OCI-LY7 (cell line): ENCODE measurements at regions of chr3 and their contacts with region 1.

Region 1: GRCh38 chr3:5136211-5136918 is 14.3 kb downstream of the ARL8B start:
- DNase-seq: peak; percentile 83
- H3K4me3 ChIP-seq: no peak overlapping the region
- H3K27ac ChIP-seq: peak overlapping the region; percentile 53
- H3K4me1 ChIP-seq: peaks cover 47% of the 10 kb centered on the region
- CTCF ChIP-seq: peak; percentile 92

Region 2: GRCh38 chr3:4162096-4162495 is 974.3 kb before region 1 on chr3:
- CTCF ChIA-PET with region 1: no interaction called
- POLR2A ChIA-PET with region 1: no interaction called
- intact Hi-C with region 1: no loop called
- DNase-seq: no peak
- H3K4me3 ChIP-seq: no peak overlapping the region
- H3K27ac ChIP-seq: no peak overlapping the region
- H3K4me1 ChIP-seq: no peaks in the 10 kb centered on the region
- CTCF ChIP-seq: no peak

Region 3: GRCh38 chr3:4615750-4616149 is 520.6 kb before region 1 on chr3:
- CTCF ChIA-PET with region 1: no interaction called
- POLR2A ChIA-PET with region 1: no interaction called
- intact Hi-C with region 1: no loop called
- DNase-seq: no peak
- H3K4me3 ChIP-seq: no peak overlapping the region
- H3K27ac ChIP-seq: no peak overlapping the region
- H3K4me1 ChIP-seq: no peaks in the 10 kb centered on the region
- CTCF ChIP-seq: no peak

Region 4: GRCh38 chr3:5122030-5122740 is 14.2 kb before region 1 on chr3 and contains the start of gene ARL8B:
- CTCF ChIA-PET with region 1: no interaction called
- POLR2A ChIA-PET with region 1: interaction called, 52 read pairs
- intact Hi-C with region 1: no loop called
- DNase-seq: peak; percentile 92
- H3K4me3 ChIP-seq: peak within 1 kb of the TSS; percentile 99
- H3K27ac ChIP-seq: peak within 1 kb of the TSS; percentile 31
- H3K4me1 ChIP-seq: peaks cover 27% of the 10 kb centered on the region
- CTCF ChIP-seq: peak; percentile 95
- total RNA-seq, gene ARL8B: 20.1 and 27.1 TPM in 2 replicates

Region 5: GRCh38 chr3:5217824-5218595 is 81.6 kb after region 1 on chr3:
- CTCF ChIA-PET with region 1: interaction called, 3 read pairs
- POLR2A ChIA-PET with region 1: interaction called, 3 read pairs
- intact Hi-C with region 1: loop called (anchors 2 kb)
- DNase-seq: no peak
- H3K4me3 ChIP-seq: no peak overlapping the region
- H3K27ac ChIP-seq: peak overlapping the region; percentile 7
- H3K4me1 ChIP-seq: peaks cover 5% of the 10 kb centered on the region
- CTCF ChIP-seq: no peak